A673 (cell line): ENCODE measurements at regions of chr15 and their contacts with region 1.

Region 1: DNA sequence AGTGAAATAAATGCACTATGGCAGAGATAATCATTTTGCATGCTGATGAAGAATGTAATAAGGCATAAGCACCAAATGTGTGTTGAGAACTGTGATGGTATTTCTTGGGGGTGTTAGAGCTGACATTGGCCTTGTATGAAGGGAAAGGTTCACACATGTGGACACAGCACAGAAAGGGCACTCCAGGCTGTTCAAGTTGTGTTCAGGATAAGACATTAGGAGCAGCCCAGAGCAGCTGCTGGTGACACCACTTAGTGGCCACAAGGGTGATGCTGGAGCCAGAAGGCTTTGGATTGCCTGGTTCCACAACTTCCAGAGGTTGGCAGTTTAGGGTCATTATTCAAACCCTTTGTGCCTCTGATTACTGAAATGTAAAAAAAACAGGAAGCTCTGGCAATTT is 155.4 kb downstream of the GOLGA6L6 start:
- DNase-seq: no peak
- H3K4me3 ChIP-seq: no peak overlapping the region
- H3K27ac ChIP-seq: no peak overlapping the region
- H3K4me1 ChIP-seq: no peaks in the 10 kb centered on the region
- H3K27me3 ChIP-seq: no peaks in the 10 kb centered on the region
- CTCF ChIP-seq: no peak

Region 2: DNA sequence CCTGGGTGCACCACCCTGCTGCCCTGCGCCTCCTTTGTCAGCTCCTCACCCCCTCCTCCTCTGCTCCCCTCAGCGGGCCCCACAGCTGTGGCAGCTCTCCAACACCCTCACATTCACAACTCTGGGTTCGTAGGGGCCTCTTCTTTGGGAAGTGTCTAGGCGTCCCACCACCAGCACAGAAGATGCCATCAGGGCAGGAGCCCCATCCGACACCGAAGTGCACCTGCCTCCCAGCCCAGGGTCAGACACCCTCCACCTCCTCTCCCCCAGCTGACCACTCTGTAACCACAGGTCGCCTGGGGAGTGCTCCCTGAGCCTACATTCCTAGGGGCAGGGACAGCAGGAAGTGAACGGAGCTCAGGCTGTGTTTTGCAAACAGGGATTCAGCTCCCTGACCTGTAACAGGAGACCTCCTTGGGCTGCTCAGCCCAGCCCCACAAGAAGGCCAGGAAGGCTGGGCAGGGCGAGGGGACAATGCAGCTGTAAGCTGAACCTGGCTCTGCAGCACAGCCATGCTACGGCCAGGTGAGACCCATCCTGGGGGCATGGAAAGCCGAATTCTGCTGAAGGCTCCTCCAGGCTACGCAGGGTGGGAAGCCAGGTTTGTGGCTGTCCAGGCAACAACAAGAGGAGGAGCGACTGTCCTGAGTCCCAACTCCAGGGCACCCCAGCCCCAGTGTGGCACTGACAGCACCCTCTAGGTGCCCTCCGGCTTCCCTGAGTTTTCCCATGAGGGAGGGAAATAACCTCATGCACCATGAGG is 113.6 kb before region 1 on chr15:
- CTCF ChIA-PET with region 1: no interaction called
- POLR2A ChIA-PET with region 1: no interaction called
- intact Hi-C with region 1: no loop called
- DNase-seq: no peak
- H3K4me3 ChIP-seq: no peak overlapping the region
- H3K27ac ChIP-seq: no peak overlapping the region
- H3K4me1 ChIP-seq: no peaks in the 10 kb centered on the region
- H3K27me3 ChIP-seq: no peaks in the 10 kb centered on the region
- CTCF ChIP-seq: no peak

Region 3: DNA sequence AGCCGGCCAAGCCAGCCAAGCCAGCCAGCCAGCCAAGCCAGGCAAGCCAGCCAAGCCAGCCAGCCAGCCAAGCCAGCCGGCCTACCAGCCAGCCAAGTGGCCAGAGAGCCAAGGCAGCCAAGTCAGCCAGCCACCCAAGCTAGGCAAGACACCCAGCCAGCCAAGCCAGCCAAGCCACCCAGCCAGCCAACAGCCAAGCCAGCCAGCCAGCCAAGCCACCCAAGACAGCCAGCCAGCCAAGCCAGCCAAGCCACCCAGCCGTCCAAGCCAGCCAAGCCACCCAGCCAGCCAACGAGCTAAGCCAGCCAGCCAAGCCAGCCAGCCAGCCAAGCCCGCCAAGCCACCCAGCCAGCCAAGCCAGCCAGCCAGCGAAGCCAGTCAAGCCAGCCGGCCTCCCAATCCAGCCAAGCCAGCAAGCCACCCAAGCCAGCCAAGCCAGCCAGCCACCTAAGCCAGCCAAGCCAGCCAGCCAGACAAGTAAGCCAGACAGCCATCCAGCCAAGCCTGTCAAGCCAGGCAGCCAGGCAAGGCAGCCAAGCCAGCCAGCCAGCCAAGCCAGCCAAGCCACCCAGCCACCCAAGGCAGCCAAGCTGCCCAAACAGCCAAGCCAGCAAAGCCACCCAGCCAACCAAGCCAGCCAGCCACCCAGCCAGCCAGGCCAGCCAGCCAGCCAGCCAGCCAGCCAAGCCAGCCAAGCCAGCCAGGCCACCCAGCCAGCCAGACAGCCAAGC is 45.1 kb before region 1 on chr15:
- CTCF ChIA-PET with region 1: no interaction called
- POLR2A ChIA-PET with region 1: no interaction called
- intact Hi-C with region 1: loop called (anchors 5 kb)
- DNase-seq: no peak
- H3K4me3 ChIP-seq: no peak overlapping the region
- H3K27ac ChIP-seq: no peak overlapping the region
- H3K4me1 ChIP-seq: no peaks in the 10 kb centered on the region
- H3K27me3 ChIP-seq: no peaks in the 10 kb centered on the region
- CTCF ChIP-seq: no peak